AG04449 (cell line): ENCODE measurements at regions of chr17 and their contacts with region 1.

Region 1: DNA sequence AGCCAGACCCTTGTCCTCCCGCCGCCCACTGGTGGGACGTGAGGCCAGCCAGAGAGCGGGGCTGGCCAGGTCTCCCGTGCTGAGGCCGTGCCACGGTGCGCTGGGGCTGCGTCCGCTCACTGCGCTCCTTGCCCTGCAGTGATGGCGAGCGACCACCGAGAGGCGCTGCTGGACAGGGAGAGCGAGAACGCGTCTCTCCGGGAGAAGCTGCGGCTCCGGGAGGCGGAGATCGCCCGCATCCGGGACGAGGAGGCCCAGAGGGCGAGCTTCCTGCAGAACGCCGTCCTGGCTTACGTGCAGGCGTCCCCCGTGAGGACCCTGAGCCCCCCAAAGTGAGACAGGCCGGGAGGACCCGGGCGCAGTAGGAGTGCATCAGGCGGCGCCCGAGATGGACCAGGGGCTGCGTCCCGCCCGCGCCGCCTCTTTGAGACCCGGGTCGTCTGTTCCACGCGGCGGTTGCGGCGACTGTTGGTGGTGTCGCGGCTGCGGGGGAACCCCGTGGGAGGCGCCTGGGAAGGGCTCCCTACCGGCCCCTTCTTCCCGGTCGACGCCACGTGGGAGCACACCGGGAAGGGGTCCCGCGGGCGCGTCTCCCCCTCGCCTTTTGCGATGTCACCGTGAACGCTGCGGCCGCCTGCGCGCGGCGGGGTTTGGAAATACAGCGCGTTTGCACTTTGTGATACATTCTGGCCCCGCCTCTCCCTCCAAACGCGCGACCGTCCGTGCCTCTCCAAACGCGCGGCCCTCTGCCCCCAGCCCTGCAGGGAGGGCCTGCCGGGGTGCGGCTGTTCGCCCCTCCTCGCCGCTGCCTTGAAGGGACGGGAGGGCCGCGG is 792 bp upstream of the RAC3 start:
- DNase-seq: no peak
- H3K4me3 ChIP-seq: peak overlapping the region; percentile 55
- CTCF ChIP-seq: peak; percentile 96

Region 2: GRCh38 chr17:81984773-81985410 is 45.8 kb before region 1 on chr17:
- CTCF ChIA-PET with region 1: no interaction called
- POLR2A ChIA-PET with region 1: no interaction called
- DNase-seq: no peak
- H3K4me3 ChIP-seq: no peak overlapping the region
- CTCF ChIP-seq: no peak

Region 3: DNA sequence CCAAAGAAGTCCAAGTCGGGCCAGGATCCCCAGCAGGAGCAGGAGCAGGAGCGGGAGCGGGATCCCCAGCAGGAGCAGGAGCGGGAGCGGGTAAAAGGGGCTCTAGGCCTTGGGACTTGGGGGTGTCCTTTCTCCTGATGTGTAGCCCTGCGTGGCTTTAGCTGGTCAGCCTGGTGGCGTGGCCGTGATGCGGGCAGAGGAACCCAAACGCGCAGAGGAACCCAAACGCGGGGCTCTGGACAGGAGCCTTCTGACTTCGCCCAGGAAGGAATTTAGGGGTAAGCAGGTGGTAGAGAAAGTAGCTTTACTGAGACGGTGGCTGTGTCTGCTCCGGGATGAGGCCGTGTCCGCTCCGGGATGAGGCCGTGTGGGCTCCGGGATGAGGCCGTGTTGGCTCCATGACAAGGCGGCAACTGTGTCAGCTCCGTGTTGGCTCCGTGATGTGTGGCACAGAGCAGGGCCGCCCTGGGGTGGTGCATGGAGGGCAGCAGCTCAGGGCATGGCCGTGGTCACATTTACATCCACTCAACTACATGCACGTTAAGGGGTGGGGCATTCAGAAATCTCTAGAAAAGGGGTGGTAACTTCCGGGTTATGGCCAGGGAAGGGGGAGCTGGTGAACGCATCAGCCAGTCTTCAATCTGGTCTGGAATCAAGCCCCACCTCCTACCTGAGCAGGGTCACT is 33.8 kb before region 1 on chr17:
- CTCF ChIA-PET with region 1: no interaction called
- POLR2A ChIA-PET with region 1: no interaction called
- DNase-seq: no peak
- H3K4me3 ChIP-seq: no peak overlapping the region
- CTCF ChIP-seq: no peak

Region 4: GRCh38 chr17:82051776-82052637 is 21.3 kb after region 1 on chr17 and contains the starts of genes GPS1 and RFNG:
- CTCF ChIA-PET with region 1: interaction called, 14 read pairs
- POLR2A ChIA-PET with region 1: interaction called, 3 read pairs
- DNase-seq: no peak
- H3K4me3 ChIP-seq: peak within 1 kb of the TSS; percentile 82
- CTCF ChIP-seq: no peak

Region 5: GRCh38 chr17:82065193-82065637 is 34.5 kb after region 1 on chr17:
- CTCF ChIA-PET with region 1: interaction called, 12 read pairs
- POLR2A ChIA-PET with region 1: no interaction called
- DNase-seq: no peak
- H3K4me3 ChIP-seq: peak overlapping the region; percentile 73
- CTCF ChIP-seq: no peak

Region 6: DNA sequence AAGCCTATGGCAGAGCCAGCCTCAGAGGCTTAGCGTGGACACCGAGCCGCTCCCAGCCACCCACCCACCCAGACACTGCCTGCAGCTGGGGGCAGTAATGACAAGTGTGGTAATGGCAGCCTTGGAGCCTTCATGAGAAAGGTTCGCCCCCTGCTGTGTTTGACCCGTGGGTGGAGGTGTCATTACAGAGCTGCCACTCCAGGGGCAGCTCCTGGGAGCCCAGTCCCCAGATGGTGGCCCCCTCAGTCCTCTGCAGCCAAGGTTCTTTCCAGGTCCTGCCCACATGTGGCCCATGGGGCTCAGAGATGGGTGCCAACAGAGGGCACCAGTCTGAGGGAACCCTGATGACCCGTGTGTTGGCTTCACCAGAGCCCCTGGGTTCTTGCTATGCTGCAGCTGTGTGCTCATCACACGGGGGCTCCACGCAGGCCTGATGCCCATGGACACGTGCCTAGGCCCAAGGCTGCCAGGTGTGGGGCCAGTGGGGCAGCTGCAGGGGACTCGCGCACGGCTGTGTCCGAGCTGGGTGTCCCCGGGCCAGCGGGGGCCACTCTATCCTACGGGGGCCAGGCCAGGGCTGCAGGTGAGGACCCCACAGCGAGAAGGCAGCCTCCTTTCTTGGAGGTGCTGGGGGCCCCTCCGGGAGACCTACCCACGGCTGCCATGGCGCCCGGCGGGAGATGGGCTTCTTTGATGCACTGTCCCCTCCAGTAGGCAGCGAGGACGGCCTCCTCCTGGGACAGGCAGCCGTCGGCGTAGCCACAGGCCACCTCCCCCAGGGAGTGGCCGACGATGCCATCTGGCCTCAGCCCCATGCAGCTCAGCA is 59.2 kb after region 1 on chr17:
- CTCF ChIA-PET with region 1: no interaction called
- POLR2A ChIA-PET with region 1: no interaction called
- DNase-seq: no peak
- H3K4me3 ChIP-seq: no peak overlapping the region
- CTCF ChIP-seq: no peak

Region 7: DNA sequence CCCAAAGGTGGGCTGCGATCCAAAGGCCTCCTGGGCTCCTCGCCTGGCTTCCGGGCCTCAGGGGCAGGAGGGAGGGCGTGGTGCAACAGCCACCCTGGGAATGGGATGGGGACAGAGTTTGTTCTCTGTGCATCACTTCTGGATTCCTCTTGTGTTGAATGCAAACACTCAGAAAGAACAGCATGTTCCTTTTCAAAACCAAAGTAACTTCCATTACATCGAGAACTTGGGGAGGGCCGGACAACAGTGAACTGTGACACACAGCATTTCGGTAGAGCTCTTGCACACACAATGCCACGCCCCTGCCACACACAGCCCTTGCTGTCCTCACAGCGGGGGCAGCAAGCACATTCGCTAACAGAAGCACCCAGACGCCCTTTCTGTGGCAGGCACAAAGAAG is 103.4 kb after region 1 on chr17:
- CTCF ChIA-PET with region 1: interaction called, 11 read pairs
- POLR2A ChIA-PET with region 1: no interaction called
- DNase-seq: no peak
- H3K4me3 ChIP-seq: no peak overlapping the region
- CTCF ChIP-seq: no peak

Region 8: GRCh38 chr17:82145550-82146190 is 115.0 kb after region 1 on chr17:
- CTCF ChIA-PET with region 1: interaction called, 12 read pairs
- POLR2A ChIA-PET with region 1: no interaction called
- DNase-seq: no peak
- H3K4me3 ChIP-seq: no peak overlapping the region
- CTCF ChIP-seq: no peak

Region 9: DNA sequence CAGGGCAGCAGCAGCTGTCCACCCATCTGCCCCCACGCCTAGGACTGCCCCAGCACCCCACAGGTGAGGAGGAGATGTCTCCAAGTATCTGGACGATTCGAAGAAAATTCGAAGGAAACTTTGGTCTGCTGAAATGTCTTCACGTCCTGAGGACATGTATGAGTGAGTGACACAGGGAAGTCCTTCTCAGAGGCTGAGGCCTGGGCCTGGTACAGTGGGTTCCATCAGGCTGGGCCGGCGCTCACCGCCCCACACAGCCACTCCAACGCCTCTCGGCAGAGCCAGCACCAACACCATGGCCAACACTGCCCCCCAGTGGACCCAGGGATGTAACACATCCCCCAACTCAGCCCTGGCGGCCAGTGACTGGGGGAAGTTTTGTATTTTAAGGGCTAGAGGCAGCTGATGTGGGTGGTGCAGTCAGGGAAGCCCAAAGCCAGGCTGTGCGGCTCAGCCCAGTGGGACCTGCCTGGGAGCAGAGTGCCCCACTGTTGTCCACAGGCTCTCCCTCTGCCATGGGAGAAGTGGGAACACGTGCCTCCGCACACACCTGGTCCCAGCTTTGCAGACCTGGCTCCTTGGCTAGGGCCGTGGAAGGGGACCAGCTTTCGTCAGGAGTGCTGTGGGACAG is 123.2 kb after region 1 on chr17:
- CTCF ChIA-PET with region 1: interaction called, 94 read pairs
- POLR2A ChIA-PET with region 1: interaction called, 3 read pairs
- DNase-seq: no peak
- H3K4me3 ChIP-seq: no peak overlapping the region
- CTCF ChIP-seq: peak; percentile 89